OCI-LY7 (cell line): ENCODE measurements at regions of chr4 and their contacts with region 1.

Region 1: GRCh38 chr4:37588150-37588549 is 98.0 kb downstream of the RELL1 start:
- DNase-seq: no peak
- H3K4me3 ChIP-seq: no peak overlapping the region
- H3K27ac ChIP-seq: no peak overlapping the region
- H3K4me1 ChIP-seq: no peaks in the 10 kb centered on the region
- CTCF ChIP-seq: no peak

Region 2: DNA sequence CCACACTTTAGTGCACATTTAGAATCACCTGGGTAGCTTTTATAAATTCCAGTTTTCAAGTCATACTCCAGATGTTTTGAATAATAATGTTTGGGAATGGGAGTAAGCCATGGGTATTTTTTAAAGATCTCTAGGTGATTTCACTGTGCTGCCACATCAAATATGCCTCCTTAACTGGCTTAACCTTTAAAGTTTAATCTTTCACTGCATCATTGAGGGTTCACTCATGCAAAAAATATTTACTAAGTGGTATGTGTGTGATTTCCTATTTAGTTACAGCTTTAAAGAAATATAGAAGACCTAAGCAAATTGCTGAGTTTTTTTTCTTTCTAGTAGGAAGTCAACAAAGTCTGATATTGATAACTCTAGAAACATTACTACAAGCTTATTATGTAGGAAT is 621.1 kb before region 1 on chr4:
- CTCF ChIA-PET with region 1: no interaction called
- POLR2A ChIA-PET with region 1: no interaction called
- intact Hi-C with region 1: no loop called
- DNase-seq: no peak
- H3K4me3 ChIP-seq: no peak overlapping the region
- H3K27ac ChIP-seq: no peak overlapping the region
- H3K4me1 ChIP-seq: no peaks in the 10 kb centered on the region
- CTCF ChIP-seq: no peak

Region 3: DNA sequence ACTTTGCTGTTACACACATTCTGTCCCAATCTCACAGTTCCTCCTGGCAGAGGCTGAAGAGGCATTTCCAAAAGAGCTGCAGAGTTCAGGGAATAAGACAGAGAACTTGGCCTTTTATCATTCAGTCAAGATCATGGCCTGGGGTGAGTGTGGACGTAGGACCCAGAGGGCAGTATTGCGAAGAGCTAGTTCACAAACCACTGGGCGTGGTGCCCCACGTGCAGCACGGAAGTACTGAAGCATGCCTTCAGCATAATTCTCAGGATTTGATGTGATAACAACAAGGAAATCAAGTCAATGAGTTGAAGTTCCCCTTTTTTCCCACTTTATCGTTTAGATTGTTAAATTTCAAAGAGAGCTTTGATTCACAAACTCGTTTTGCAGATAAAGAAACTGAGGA is 19.7 kb before region 1 on chr4:
- CTCF ChIA-PET with region 1: no interaction called
- POLR2A ChIA-PET with region 1: interaction called, 10 read pairs
- intact Hi-C with region 1: no loop called
- DNase-seq: no peak
- H3K4me3 ChIP-seq: no peak overlapping the region
- H3K27ac ChIP-seq: no peak overlapping the region
- H3K4me1 ChIP-seq: no peaks in the 10 kb centered on the region
- CTCF ChIP-seq: no peak